ENCODE measurements at regions of chr2 and their contacts with region 1.

Region 1: DNA sequence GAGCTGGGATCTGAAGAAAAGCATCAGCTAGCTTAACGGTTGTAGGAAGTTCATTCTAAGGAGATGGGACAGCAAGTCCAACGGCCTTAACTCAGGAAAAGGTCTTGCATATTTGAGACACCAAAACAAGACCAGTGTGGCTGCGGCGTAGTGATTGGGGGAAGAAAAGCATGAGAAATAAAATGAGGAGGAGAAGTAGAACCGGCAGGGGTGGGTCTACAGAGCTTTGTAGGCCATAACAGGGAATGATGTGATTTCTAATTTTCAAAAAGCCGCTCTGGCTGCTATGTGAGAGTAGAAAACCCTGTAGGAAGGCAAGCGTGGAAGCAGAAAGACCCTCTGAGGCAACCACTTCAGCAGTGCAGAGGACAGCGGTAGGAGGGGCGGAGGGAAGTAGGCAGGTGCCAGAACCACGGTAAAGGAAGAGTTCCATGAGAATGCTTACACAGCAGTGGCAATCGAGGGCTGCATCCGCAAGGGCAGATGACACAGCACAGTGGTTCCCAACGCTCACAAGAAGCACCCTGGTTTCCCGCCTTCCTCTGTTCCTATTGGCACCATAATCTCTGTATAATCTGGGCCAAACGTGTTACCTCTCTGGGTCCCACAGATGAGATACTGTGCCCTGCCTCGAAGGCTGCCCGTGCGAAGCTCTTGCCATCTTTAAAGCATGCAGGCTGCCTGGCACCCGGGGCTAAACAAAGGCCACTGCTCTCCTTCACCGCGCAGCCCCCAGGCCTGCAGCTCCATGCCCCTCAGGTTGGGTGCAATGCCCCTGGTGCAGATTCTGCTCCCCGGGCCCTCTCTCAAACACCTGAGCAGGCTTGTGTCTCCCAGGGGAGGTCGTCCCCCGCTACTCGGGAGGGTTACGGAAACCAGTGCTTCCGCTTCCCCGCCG is 791 bp downstream of the ANKRD39 start:
- DNase-seq: peak in 3 of 4 experiments; percentile 36 to 68 (median 53)
- ATAC-seq: peak; percentile 7
- H3K4me3 ChIP-seq: peak overlapping the region; percentile 70
- H3K27ac ChIP-seq: peak overlapping the region; percentile 78
- H3K4me1 ChIP-seq: peaks cover 24 to 51% of the 10 kb centered on the region in 2 experiments
- H3K27me3 ChIP-seq: no peaks in the 10 kb centered on the region
- CTCF ChIP-seq: no peak
- EP300 ChIP-seq: no peak
- POLR2A ChIP-seq: no peak
- RAD21 ChIP-seq: no peak

Region 2: GRCh38 chr2:96868555-96869280 is 11.7 kb after region 1 on chr2:
- CTCF ChIA-PET with region 1: interaction called, 3 read pairs
- POLR2A ChIA-PET with region 1: interaction called, 67 read pairs
- in situ Hi-C with region 1: no loop called
- intact Hi-C with region 1: loop called (anchors 2 kb)
- DNase-seq: peak; percentile 88 to 94 (median 90)
- ATAC-seq: peak; percentile 78
- H3K4me3 ChIP-seq: peak overlapping the region; percentile 97
- H3K27ac ChIP-seq: peak overlapping the region; percentile 95
- H3K4me1 ChIP-seq: peaks cover 27 to 89% of the 10 kb centered on the region in 2 experiments
- H3K27me3 ChIP-seq: no peaks in the 10 kb centered on the region
- CTCF ChIP-seq: peak; percentile 59 to 72 (median 62); a peak in 5 of 6 replicates
- EP300 ChIP-seq: no peak
- POLR2A ChIP-seq: peak; percentile 61; the same call in 1 of the 2 replicates
- RAD21 ChIP-seq: peak in 1 of 2 experiments; percentile 34; a peak in 2 of 4 replicates

Region 3: DNA sequence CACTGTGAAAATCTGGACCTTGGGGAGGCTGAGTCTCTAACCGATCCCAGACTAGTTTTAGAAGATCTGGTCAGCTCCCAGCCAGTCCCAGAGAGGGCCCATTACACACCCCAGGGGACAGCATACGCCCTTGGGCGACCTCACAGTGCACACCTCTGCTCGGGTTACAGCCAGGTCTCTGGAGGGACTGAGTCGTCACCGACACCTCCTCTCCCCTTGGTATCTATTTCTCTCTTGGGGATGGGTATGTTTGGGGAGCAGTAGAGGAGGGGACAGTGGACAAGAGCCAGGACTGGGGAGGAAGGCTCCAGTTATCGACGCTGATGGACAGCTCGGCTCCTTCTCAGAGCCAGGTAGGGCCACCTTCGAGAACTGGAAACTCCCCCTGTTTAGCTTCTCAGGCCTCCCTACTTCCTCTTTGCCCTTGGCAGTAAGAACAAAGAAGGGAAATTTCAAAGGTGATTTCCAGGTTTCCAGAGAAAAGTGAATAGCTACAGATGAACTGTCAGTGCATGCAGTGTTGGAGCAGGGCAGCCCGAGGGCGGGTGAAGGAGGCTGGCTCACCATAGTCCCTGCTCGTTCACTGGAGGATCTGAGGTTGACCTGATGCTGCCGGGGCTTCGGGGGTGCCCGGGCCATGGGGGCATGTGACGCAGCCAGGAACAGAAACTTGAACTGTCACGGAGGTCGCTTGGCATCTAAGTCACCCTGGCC is 17.2 kb after region 1 on chr2:
- CTCF ChIA-PET with region 1: no interaction called
- POLR2A ChIA-PET with region 1: interaction called, 67 read pairs
- in situ Hi-C with region 1: no loop called
- intact Hi-C with region 1: loop called (anchors 2 kb)
- DNase-seq: peak in 2 of 4 experiments; percentile 38 to 43
- ATAC-seq: peak; percentile 22
- H3K4me3 ChIP-seq: no peak overlapping the region
- H3K27ac ChIP-seq: peak overlapping the region; percentile 53; the same call in 2 of the 3 replicates
- H3K4me1 ChIP-seq: peaks cover 43 to 91% of the 10 kb centered on the region in 2 experiments
- H3K27me3 ChIP-seq: no peaks in the 10 kb centered on the region
- CTCF ChIP-seq: no peak
- EP300 ChIP-seq: no peak
- POLR2A ChIP-seq: no peak
- RAD21 ChIP-seq: no peak

Region 4: DNA sequence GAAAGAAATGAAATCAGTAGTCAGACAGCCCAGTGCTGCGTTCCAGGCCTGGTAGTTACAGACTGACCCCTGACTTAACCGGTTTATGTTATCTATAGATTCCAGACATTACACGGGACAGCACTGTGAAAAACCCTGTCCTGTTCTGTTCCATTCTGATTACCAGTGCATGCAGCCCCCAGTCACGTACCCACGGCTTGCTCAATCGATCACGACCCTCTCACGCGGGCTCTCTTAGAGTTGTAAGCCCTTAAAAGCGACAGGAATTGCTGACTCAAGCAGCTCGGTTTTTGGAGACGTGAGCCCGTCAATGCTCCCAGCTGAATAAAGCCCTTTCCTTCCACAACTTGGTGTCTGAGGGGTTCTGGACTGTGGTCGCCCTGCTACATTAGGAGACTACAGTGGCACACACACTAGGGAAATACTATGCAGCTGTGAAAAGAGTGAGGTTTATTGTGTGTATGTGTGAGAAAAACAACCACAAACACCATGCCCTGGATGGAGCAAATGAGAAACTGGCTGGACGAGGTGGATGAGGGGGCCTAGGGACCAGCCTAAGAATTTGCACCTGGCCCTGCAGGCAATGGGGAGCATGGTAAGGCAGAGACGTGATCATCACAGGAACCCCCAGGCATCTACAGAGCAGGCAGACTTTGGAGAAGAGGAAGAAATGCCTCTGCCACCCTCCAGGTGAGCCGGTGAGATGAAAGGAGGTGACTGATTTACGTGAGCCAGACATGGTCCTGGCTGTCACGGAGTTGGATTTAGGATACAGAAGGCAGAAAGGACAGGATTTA is 61.9 kb after region 1 on chr2:
- CTCF ChIA-PET with region 1: no interaction called
- POLR2A ChIA-PET with region 1: no interaction called
- in situ Hi-C with region 1: no loop called
- intact Hi-C with region 1: loop called (anchors 1 kb)
- DNase-seq: peak; percentile 73 to 92 (median 80)
- ATAC-seq: peak; percentile 90
- H3K4me3 ChIP-seq: peak overlapping the region; percentile 14; the same call in 1 of the 2 replicates
- H3K27ac ChIP-seq: peak overlapping the region; percentile 90
- H3K4me1 ChIP-seq: peaks cover 68 to 69% of the 10 kb centered on the region in 2 experiments
- H3K27me3 ChIP-seq: no peaks in the 10 kb centered on the region
- CTCF ChIP-seq: no peak
- EP300 ChIP-seq: peak; percentile 96
- POLR2A ChIP-seq: no peak
- RAD21 ChIP-seq: no peak

Region 5: GRCh38 chr2:96951093-96951654 is 94.1 kb after region 1 on chr2:
- CTCF ChIA-PET with region 1: interaction called, 37 read pairs
- POLR2A ChIA-PET with region 1: interaction called, 13 read pairs
- in situ Hi-C with region 1: loop called (anchors 5 kb)
- intact Hi-C with region 1: loop called (anchors 1 kb)
- DNase-seq: peak; percentile 86 to 90 (median 87)
- ATAC-seq: peak; percentile 98
- H3K4me3 ChIP-seq: no peak overlapping the region
- H3K27ac ChIP-seq: no peak overlapping the region
- H3K4me1 ChIP-seq: peaks cover 46 to 57% of the 10 kb centered on the region in 2 experiments; a peak in 4 of 5 replicates
- H3K27me3 ChIP-seq: no peaks in the 10 kb centered on the region
- CTCF ChIP-seq: peak; percentile 91 to 96 (median 94)
- EP300 ChIP-seq: no peak
- POLR2A ChIP-seq: no peak
- RAD21 ChIP-seq: peak; percentile 95 to 98

Region 6: GRCh38 chr2:96960153-96960961 is 103.3 kb after region 1 on chr2:
- CTCF ChIA-PET with region 1: interaction called, 41 read pairs
- POLR2A ChIA-PET with region 1: interaction called, 6 read pairs
- in situ Hi-C with region 1: no loop called
- intact Hi-C with region 1: loop called (anchors 1 kb)
- DNase-seq: peak; percentile 89 to 93 (median 90)
- ATAC-seq: peak; percentile 100
- H3K4me3 ChIP-seq: no peak overlapping the region
- H3K27ac ChIP-seq: no peak overlapping the region
- H3K4me1 ChIP-seq: peaks cover 4 to 23% of the 10 kb centered on the region in 2 experiments; a peak in 4 of 5 replicates
- H3K27me3 ChIP-seq: no peaks in the 10 kb centered on the region; a peak in 1 of 5 replicates
- CTCF ChIP-seq: peak; percentile 94 to 96 (median 94)
- EP300 ChIP-seq: no peak
- POLR2A ChIP-seq: no peak
- RAD21 ChIP-seq: peak; percentile 94 to 98